ENCODE measurements at regions of chr12 and their contacts with region 1.

Region 1: DNA sequence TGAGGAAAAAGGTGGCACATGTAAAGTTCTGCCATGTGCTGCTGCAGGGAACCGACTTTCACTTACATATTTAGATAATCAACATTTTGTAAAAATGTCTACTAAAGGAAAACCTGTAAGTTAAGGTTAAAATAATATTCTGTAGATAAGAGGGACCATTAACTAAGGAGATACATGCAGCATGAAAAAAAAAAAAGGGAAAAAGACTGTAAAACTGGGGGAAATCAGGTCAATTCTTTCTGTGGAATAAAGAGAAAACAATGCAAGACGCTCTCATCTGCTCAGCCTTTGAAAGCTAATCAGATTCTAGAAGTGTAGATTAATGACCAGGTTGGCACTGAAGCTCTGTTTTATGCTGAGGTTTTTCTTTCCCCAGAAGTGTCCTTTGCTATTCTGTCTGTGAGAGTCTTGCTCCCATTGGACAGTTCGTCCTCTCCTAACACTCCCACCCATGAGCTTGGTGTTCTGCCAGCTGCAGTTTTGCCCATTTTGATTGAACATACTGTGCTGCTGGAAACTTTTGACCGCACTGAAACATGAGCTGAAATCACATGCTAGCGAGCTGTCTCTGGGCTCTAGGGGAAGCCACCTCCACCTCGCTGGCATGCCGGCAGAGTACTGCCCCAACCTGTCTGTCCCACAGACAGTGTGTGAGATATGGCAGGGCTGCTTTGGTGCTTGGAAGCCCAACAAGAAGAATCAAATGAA is 39.7 kb downstream of the PPTC7 start:
- DNase-seq: peak; percentile 91
- ATAC-seq: peak; percentile 91 to 95

Region 2: GRCh38 chr12:110577717-110578521 is 34.5 kb after region 1 on chr12:
- intact Hi-C with region 1: loop called in 1 of 2 experiments (anchors 5 kb)
- DNase-seq: no peak
- ATAC-seq: peak in 1 of 2 donors; percentile 41